Activated naive CD4-positive, alpha-beta T cell treated with anti-CD3 and anti-CD28 coated beads, Interleukin-2, amount 10 ng/mL, durations not matched to agents 7 days and 5 days (primary cell): ENCODE measurements at regions of chr2 and their contacts with region 1.

Region 1: DNA sequence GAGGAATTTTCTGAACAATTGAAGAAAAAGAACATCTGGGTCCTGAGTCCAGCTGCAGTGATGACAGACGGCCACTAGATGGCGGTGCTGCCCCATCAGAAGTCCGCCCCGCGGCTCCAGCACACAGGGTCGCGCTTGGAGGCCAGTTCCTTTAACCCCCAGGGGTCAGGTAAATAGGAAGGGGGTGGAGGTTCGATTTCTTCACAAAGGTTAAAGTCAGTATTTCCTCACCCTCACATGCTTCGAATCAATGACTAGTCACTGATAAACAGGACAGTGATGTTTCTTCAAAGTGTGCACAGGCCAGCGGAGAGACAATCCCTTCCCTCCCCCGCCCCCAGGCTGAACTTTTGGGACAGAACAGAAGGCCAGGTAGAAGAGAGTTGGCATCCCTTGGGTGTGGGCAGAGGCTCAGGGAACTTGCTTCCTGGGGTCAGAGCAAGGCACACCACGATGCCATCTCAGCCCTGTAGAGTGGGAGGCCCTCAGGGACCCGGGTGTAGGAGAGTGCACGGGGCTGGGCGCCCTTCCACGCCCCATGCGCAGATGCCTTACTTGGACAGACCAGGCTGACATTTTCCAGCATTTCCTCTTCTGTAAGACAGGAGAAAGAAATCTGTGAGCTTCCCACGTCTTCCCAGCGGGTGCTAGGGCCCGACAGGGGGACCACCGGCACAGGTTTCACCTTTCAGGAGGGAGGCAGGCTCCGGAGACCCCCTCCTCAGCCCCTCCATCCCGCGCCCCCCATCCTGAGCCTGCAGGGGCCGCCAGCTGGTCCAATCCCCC is 722 bp downstream of the APOB start:
- DNase-seq: peak; percentile 65
- H3K4me3 Mint-ChIP-seq: no peak overlapping the region
- H3K27ac Mint-ChIP-seq: no peak overlapping the region
- H3K4me1 Mint-ChIP-seq: no peaks in the 10 kb centered on the region
- H3K27me3 Mint-ChIP-seq: peaks cover 24% of the 10 kb centered on the region

Region 2: GRCh38 chr2:21055879-21056790 is 13.0 kb after region 1 on chr2:
- CTCF ChIA-PET with region 1: interaction called, 10 read pairs
- DNase-seq: no peak
- H3K4me3 Mint-ChIP-seq: no peak overlapping the region
- H3K27ac Mint-ChIP-seq: no peak overlapping the region
- H3K4me1 Mint-ChIP-seq: no peaks in the 10 kb centered on the region
- H3K27me3 Mint-ChIP-seq: no peaks in the 10 kb centered on the region

Region 3: DNA sequence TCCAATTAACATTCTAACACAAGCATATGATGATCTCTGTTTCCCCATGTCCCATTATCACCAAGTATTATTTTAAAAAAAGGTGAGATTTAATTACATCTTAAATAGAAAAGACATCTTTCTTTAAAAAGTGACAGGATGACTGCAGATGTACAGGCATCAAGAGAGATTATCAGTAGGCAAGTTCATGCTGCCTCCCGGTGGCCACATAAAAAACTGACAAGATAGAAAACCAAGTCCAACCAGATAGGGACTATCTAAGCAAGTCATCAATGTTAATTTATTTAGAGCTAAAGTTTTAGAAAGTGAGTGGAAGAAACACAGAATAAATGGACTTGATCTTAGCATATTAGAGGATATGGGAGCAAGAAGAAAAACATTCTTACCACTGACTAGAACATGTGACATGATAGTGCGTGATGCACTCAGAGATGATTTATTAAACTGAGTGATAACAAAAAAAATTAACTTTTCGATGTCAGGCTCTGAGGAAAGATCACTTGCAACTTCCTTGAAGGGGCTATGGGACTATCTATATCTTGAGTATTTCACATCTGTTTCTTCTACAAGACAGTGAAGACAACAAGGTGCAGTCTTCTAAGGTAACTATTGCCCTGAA is 75.3 kb after region 1 on chr2:
- CTCF ChIA-PET with region 1: interaction called, 28 read pairs
- DNase-seq: peak; percentile 26
- H3K4me3 Mint-ChIP-seq: no peak overlapping the region
- H3K27ac Mint-ChIP-seq: no peak overlapping the region
- H3K4me1 Mint-ChIP-seq: no peaks in the 10 kb centered on the region
- H3K27me3 Mint-ChIP-seq: no peaks in the 10 kb centered on the region

Region 4: DNA sequence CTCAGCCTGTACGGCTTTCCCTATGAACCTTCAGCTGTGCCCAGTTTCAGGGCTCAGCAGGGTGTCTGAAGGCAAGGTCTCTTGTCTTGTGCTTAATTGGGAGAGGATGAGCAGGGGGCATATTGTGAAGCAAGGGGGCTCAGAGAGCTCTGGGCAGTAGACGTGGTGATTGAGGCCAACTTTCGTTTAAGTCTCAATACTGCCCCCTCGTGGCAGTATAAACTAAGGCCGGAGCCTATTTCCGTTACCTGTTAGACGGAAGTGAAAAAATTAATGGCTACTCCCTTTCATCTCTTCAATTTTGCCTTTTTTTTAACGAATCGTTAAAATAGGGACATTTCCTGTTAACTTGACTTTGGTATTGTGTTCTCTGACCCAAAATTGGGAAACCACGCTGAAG is 274.0 kb after region 1 on chr2:
- CTCF ChIA-PET with region 1: interaction called, 23 read pairs
- DNase-seq: peak; percentile 48
- H3K4me3 Mint-ChIP-seq: no peak overlapping the region
- H3K27ac Mint-ChIP-seq: no peak overlapping the region
- H3K4me1 Mint-ChIP-seq: no peaks in the 10 kb centered on the region
- H3K27me3 Mint-ChIP-seq: no peaks in the 10 kb centered on the region